ENCODE measurements at regions of chr5 and their contacts with region 1.

Region 1: DNA sequence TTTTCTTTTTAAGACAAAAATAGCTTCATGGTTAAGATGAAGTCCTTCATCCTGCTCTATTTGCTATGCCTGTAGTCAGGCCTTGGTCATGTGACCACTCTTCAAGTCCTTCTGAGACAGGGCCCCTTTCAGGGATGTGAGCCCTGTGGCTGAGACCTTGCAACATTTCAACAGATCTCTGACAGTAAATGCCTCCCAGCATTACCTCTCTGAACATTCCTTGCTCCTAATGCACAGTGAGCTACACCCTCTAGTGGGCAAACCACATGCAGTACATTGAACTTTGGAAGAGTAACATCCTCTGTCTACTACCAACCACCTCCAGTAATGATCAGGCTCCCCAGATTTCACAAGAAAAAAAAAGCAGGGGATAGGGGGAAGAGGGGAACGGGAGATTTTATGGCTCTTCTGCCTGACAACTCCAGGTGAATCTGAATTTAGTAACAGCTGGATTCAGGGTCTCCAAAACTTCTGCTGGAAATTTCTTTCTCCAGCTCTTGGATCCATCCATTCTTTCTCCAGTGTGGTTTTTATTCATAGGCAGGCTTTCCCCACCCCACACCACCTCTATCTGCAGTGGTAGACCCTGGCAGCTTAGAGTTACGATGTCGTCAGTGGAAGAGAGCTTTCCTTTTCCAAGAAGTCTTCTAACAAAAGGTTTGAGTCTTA is 8.9 kb upstream of the FBXO38 start:
- DNase-seq: no peak
- ATAC-seq: peak; percentile 38 to 82 (median 62)
- H3K4me3 ChIP-seq: no peak overlapping the region
- H3K27ac ChIP-seq: peak overlapping the region in 1 of 10 donors; percentile 60
- H3K4me1 ChIP-seq: peaks cover 0 to 52% (median 12%) of the 10 kb centered on the region in 9 donors
- H3K27me3 ChIP-seq: no peaks in the 10 kb centered on the region
- CTCF ChIP-seq: peak; percentile 24 to 72 (median 59)

Region 2: GRCh38 chr5:148179234-148179824 is 195.5 kb before region 1 on chr5:
- intact Hi-C with region 1: loop called in 8 of 10 experiments (anchors 5 to 10 kb)
- DNase-seq: peak in 1 of 2 donors; percentile 8
- ATAC-seq: peak in 4 of 8 donors; percentile 44 to 60 (median 54)
- H3K4me3 ChIP-seq: no peak overlapping the region
- H3K27ac ChIP-seq: no peak overlapping the region
- H3K4me1 ChIP-seq: no peaks in the 10 kb centered on the region
- H3K27me3 ChIP-seq: no peaks in the 10 kb centered on the region
- CTCF ChIP-seq: peak; percentile 40 to 86 (median 79)

Region 3: DNA sequence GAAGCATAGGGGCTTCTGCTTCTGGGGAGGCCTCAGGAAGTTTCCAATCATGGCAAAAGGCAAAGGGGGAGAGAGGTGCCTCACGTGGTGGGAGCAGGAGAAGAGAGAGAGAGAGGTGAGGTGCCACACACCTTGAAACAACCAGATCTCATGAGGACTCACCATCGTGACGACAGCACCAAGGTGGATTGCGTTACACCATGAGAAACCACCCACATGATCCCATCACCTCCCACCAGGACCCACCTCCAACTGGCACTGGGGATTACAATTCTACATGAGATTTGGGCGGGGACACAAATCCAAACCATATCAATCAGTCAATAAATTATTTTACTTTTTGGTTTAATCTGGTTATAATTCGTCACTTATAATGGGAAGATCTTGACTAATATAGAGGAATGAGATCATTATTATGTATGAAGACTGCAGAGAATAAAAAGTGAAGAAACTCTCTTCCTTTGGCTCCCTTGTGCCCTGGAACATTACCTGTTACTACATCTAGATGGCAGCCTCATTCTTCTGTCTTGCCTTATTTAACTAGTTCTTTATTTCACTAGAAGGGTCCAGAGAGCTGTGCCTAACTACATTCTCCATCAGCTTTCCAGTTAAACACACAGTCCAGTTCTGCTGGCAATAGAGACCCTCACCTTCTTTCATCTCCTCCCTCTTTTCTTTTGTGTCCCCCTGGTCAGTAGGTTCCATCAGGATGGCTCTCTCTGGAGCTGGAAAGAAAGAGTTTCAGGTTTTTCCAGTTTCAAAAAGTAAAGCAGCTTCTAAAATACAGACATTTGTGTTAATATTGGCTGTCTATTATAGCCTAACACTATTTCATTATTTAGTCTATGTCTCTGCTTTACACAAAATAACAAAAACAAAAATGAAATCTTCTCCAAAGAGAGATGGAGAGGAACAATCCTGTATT is 84.3 kb before region 1 on chr5:
- intact Hi-C with region 1: loop called in 2 of 10 experiments (anchors 10 kb)
- DNase-seq: no peak
- ATAC-seq: peak in 5 of 8 donors; percentile 16 to 72 (median 65)
- H3K4me3 ChIP-seq: no peak overlapping the region
- H3K27ac ChIP-seq: no peak overlapping the region
- H3K4me1 ChIP-seq: no peaks in the 10 kb centered on the region
- H3K27me3 ChIP-seq: no peaks in the 10 kb centered on the region
- CTCF ChIP-seq: peak; percentile 15 to 69 (median 49)

Region 4: GRCh38 chr5:148469501-148469935 is 94.7 kb after region 1 on chr5:
- intact Hi-C with region 1: no loop called
- DNase-seq: peak in 1 of 2 donors; percentile 60
- ATAC-seq: peak; percentile 19 to 84 (median 68)
- H3K4me3 ChIP-seq: no peak overlapping the region
- H3K27ac ChIP-seq: peak overlapping the region; percentile 7 to 81 (median 62)
- H3K4me1 ChIP-seq: peaks cover 0 to 35% (median 20%) of the 10 kb centered on the region in 9 donors
- H3K27me3 ChIP-seq: no peaks in the 10 kb centered on the region
- CTCF ChIP-seq: no peak

Region 5: GRCh38 chr5:149228618-149229297 is 853.9 kb after region 1 on chr5:
- intact Hi-C with region 1: no loop called
- DNase-seq: peak in 1 of 2 donors; percentile 77
- ATAC-seq: peak; percentile 85 to 95 (median 92)
- H3K4me3 ChIP-seq: no peak overlapping the region
- H3K27ac ChIP-seq: peak overlapping the region; percentile 42 to 79 (median 70)
- H3K4me1 ChIP-seq: peaks cover 10 to 45% (median 36%) of the 10 kb centered on the region in 9 donors
- H3K27me3 ChIP-seq: no peaks in the 10 kb centered on the region
- CTCF ChIP-seq: peak; percentile 69 to 92 (median 79)